A549 (cell line): ENCODE measurements at regions of chr19 and their contacts with region 1.

Region 1: GRCh38 chr19:18000935-18001778 is 6.8 kb upstream of the ARRDC2 start:
- DNase-seq: peak; percentile 82 to 94
- ATAC-seq: peak; percentile 67 to 73
- H3K4me3 ChIP-seq: peak overlapping the region; percentile 100
- H3K27ac ChIP-seq: peak overlapping the region; percentile 90 to 93
- H3K4me1 ChIP-seq: peaks cover 29% of the 10 kb centered on the region
- CTCF ChIP-seq: no peak
- EP300 ChIP-seq: peak; percentile 26; a peak in 2 of 5 replicates
- POLR2A ChIP-seq: peak; percentile 51
- RAD21 ChIP-seq: no peak

Region 2: GRCh38 chr19:17829855-17830566 is 171.1 kb before region 1 on chr19:
- CTCF ChIA-PET with region 1: no interaction called
- POLR2A ChIA-PET with region 1: no interaction called
- DNase-seq: peak; percentile 82 to 87
- ATAC-seq: peak; percentile 79 to 84
- H3K4me3 ChIP-seq: peak overlapping the region; percentile 55
- H3K27ac ChIP-seq: peak overlapping the region; percentile 88 to 89
- H3K4me1 ChIP-seq: peaks cover 4% of the 10 kb centered on the region; the same call in 1 of the 3 replicates
- CTCF ChIP-seq: no peak
- EP300 ChIP-seq: no peak
- POLR2A ChIP-seq: no peak
- RAD21 ChIP-seq: no peak

Region 3: GRCh38 chr19:17865364-17866311 is 135.5 kb before region 1 on chr19:
- CTCF ChIA-PET with region 1: interaction called, 58 read pairs
- POLR2A ChIA-PET with region 1: interaction called, 7 read pairs
- DNase-seq: peak in 1 of 2 experiments; percentile 67
- ATAC-seq: peak; percentile 51 to 59
- H3K4me3 ChIP-seq: no peak overlapping the region
- H3K27ac ChIP-seq: peak overlapping the region in 1 of 2 experiments; percentile 64; a peak in 3 of 6 replicates
- H3K4me1 ChIP-seq: peaks cover 42% of the 10 kb centered on the region
- CTCF ChIP-seq: no peak
- EP300 ChIP-seq: no peak
- POLR2A ChIP-seq: no peak; the same call in 1 of the 2 replicates
- RAD21 ChIP-seq: no peak

Region 4: DNA sequence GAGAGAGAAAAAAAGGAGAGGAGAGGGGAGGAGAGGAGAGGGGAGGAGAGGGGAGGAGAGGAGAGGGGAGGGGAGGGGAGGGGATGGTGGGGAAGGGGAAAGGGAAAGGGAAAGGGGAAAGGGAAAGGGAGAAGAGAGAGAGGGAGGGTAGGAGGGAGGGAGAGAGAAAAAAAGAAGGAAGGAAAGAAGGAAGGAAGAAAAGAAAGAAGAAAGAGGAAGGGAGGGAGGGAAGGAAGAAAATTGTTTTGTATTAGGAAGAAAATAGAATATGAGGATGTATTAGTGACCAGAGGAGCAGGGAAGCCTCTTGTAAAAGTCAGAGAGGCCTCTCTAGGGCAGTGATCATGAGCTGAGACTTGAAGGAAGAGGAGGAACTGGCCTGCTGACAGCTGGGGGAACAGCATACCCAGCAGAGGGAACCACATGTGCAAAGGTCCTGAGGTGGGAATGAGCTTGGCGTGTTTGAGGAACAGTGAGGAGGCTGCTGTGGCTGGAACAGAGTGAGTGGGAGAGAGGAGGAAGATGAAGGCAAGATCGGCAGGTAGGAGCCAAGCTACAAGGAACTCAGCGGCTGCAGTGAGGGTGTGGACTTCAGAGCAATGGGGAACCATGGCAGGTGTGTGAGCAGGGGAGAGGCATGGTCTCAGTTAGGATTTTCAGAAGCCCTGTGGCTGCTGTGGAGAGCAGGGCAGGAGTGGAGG is 43.9 kb before region 1 on chr19:
- CTCF ChIA-PET with region 1: interaction called, 493 read pairs
- POLR2A ChIA-PET with region 1: no interaction called
- DNase-seq: no peak
- ATAC-seq: no peak
- H3K4me3 ChIP-seq: no peak overlapping the region
- H3K27ac ChIP-seq: no peak overlapping the region
- H3K4me1 ChIP-seq: peaks cover 4% of the 10 kb centered on the region; the same call in 2 of the 3 replicates
- CTCF ChIP-seq: no peak
- EP300 ChIP-seq: no peak
- POLR2A ChIP-seq: no peak
- RAD21 ChIP-seq: no peak

Region 5: GRCh38 chr19:17981611-17982010 is 19.5 kb before region 1 on chr19:
- CTCF ChIA-PET with region 1: interaction called, 18 read pairs
- POLR2A ChIA-PET with region 1: no interaction called
- DNase-seq: no peak
- ATAC-seq: no peak
- H3K4me3 ChIP-seq: no peak overlapping the region
- H3K27ac ChIP-seq: no peak overlapping the region
- H3K4me1 ChIP-seq: no peaks in the 10 kb centered on the region
- CTCF ChIP-seq: no peak
- EP300 ChIP-seq: no peak
- POLR2A ChIP-seq: no peak
- RAD21 ChIP-seq: no peak

Region 6: DNA sequence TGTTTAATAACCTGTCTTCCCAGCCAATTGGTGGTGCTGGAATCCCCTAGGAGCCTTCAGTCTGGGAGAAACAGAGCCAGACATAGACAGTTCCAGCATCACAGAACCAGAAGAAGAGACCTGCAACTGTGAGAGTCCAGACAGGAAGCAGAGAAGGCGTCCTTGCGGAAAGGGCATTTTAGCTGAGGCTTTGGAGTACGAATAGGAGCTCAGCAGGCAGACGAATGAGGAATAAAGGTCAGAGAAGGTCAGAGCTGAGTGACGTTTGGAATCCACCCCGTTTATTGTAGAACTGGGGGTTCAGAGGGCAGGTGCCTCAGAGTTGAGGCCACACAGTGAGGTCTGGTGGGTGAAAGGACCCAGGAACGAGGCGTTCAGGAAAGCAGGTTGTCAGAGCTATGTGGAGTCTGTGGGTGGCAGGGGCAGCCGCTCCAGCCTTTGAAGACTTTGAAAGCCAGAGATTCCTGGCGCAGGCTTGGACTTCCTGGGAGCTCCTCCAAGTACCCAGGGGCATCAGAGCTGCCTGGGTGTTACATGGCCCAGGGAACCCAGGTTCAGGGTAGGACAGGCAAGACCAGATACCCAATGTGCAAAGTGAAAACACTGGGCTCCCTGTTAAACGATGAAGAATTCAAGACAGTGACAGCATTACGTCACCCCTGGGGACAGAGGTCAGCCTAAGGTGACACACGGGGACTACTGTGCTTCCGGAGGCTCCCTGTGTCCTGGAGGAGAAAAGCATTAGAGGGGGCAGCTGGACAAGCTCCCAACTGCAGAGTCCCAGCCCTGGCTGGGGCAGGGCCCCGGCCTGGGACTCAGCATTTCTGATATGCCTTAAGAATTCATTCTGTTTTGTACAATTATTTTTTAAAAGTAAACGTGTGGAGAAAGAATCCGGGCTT is 12.3 kb after region 1 on chr19:
- CTCF ChIA-PET with region 1: interaction called, 15 read pairs
- POLR2A ChIA-PET with region 1: no interaction called
- DNase-seq: no peak
- ATAC-seq: 0 out of 6 replicates have a peak, but pooled peaks of 1 of the 2 experiments have one; percentile 26
- H3K4me3 ChIP-seq: no peak overlapping the region
- H3K27ac ChIP-seq: peak overlapping the region in 1 of 2 experiments; percentile 44; a peak in 1 of 6 replicates
- H3K4me1 ChIP-seq: peaks cover 29% of the 10 kb centered on the region
- CTCF ChIP-seq: no peak
- EP300 ChIP-seq: no peak
- POLR2A ChIP-seq: no peak
- RAD21 ChIP-seq: no peak